Aorta (tissue), 5 donors: ENCODE measurements at regions of chr16 and their contacts with region 1.

Region 1: GRCh38 chr16:1105888-1106620 is 10.0 kb upstream of the C1QTNF8 start:
- DNase-seq: peak; percentile 67 to 91
- ATAC-seq: peak; percentile 72
- H3K4me3 ChIP-seq: no peak overlapping the region
- H3K27ac ChIP-seq: no peak overlapping the region
- H3K4me1 ChIP-seq: no peaks in the 10 kb centered on the region
- H3K27me3 ChIP-seq: no peaks in the 10 kb centered on the region

Region 2: GRCh38 chr16:1066584-1067172 is 39.4 kb before region 1 on chr16:
- intact Hi-C with region 1: no loop called
- DNase-seq: no peak
- ATAC-seq: no peak
- H3K4me3 ChIP-seq: no peak overlapping the region
- H3K27ac ChIP-seq: no peak overlapping the region
- H3K4me1 ChIP-seq: no peaks in the 10 kb centered on the region
- H3K27me3 ChIP-seq: no peaks in the 10 kb centered on the region

Region 3: GRCh38 chr16:1159973-1160772 is 54.1 kb after region 1 on chr16:
- intact Hi-C with region 1: no loop called
- DNase-seq: no peak
- ATAC-seq: peak; percentile 45
- H3K4me3 ChIP-seq: no peak overlapping the region
- H3K27ac ChIP-seq: no peak overlapping the region
- H3K4me1 ChIP-seq: no peaks in the 10 kb centered on the region
- H3K27me3 ChIP-seq: no peaks in the 10 kb centered on the region

Region 4: DNA sequence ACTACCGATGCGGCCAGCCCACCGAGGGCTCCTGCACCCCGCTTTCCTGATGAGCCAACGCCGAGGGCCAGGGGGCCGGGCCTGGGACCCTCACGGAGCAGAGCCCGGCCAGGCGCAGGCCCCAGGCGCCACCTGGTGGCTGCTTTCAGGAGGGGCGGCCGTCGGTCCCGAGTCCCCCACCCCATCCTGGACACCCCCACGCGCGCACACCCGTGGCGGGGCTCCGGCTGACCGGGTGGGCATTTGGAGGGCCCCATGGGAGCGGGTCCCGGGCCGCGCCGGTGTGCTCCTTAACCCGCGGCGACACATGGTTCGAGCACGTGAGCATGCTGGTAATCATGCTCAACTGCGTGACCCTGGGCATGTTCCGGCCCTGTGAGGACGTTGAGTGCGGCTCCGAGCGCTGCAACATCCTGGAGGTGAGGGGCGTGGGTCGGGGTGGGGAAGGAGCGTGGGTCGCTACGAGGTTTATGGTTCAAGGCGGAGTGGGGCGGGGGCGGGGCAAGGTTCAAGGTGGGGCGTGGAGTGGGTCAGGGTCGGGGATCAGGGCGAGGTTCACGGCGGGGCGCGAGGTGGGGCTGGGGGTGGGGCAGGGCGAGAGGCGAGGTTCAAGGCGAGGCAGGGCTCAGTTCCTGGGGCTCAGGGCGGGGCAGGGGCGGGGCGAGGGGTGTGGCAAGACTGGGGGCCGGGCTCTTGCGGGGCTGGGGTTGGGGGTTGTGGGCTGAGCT is 88.8 kb after region 1 on chr16:
- intact Hi-C with region 1: loop called (anchors 1 kb)
- DNase-seq: no peak
- ATAC-seq: no peak
- H3K4me3 ChIP-seq: no peak overlapping the region
- H3K27ac ChIP-seq: no peak overlapping the region
- H3K4me1 ChIP-seq: no peaks in the 10 kb centered on the region
- H3K27me3 ChIP-seq: no peaks in the 10 kb centered on the region